ENCODE measurements at regions of chr17 and their contacts with region 1.

Region 1: DNA sequence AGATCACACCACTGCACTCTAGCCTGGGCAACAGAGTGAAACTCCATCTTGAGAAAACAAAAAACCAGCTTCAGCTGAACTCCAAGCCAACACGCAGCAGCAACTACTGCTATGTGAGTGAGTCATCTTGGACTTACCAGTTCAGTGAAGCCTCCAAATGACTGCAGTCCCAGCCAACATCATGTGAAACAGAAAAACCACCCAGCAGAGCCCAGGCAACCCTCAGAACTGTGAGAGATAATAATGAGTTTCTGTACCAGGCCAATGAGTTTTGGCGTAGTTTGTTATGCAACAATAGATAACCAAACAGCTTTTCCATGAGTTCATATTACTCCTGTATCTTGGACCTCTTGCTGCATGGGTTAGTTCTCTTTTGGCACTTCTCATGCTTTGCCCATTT is 23.3 kb downstream of the PHF12 start:
- DNase-seq: no peak
- ATAC-seq: no peak
- H3K4me3 ChIP-seq: no peak overlapping the region
- H3K4me3 Mint-ChIP-seq: no peak overlapping the region
- H3K27ac ChIP-seq: no peak overlapping the region
- H3K27ac Mint-ChIP-seq: peak overlapping the region; percentile 56
- H3K4me1 ChIP-seq: peaks cover 23 to 27% of the 10 kb centered on the region in 2 donors
- H3K4me1 Mint-ChIP-seq: peaks cover 52% of the 10 kb centered on the region
- H3K27me3 ChIP-seq: no peaks in the 10 kb centered on the region
- H3K27me3 Mint-ChIP-seq: no peaks in the 10 kb centered on the region
- CTCF ChIP-seq: no peak

Region 2: DNA sequence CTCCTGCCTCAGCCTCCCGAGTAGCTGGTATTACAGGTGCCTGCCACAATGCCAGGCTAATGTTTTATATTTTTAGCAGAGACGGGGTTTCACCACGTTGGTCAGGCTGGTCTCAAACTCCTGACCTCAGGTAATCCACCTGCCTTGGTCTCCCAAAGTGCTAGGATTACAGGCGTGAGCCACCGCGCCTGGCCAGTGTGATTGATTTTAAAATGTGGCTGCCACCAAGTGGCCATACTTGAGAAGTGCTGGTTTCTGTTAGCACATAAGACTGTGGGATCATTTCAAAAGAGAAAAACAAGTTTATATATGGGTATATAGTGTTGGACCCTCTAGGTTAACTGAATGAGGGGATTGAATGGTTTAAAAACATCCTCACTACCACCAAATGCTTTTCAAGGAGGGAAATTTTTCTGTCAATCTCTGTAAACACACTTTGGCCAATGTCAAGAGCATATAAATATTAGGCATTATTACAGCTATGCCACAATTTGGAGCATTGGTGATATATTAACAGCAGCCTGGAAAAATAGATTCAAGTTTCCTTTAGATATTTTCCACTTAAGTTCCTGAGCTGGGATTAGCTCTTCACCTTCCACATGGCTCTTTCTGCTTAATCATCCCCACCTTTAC is 11.6 kb before region 1 on chr17:
- CTCF ChIA-PET with region 1: interaction called, 13 read pairs
- POLR2A ChIA-PET with region 1: no interaction called
- intact Hi-C with region 1: no loop called
- DNase-seq: peak; percentile 60
- ATAC-seq: peak; percentile 80
- H3K4me3 ChIP-seq: no peak overlapping the region
- H3K4me3 Mint-ChIP-seq: no peak overlapping the region
- H3K27ac ChIP-seq: no peak overlapping the region
- H3K27ac Mint-ChIP-seq: no peak overlapping the region
- H3K4me1 ChIP-seq: no peaks in the 10 kb centered on the region
- H3K4me1 Mint-ChIP-seq: no peaks in the 10 kb centered on the region
- H3K27me3 ChIP-seq: no peaks in the 10 kb centered on the region
- H3K27me3 Mint-ChIP-seq: no peaks in the 10 kb centered on the region
- CTCF ChIP-seq: peak; percentile 82

Measured in B cell (primary cell).